ENCODE measurements at regions of chr1 and their contacts with region 1.

Region 1: GRCh38 chr1:113072757-113073478 is at the start of gene LRIG2:
- DNase-seq: peak; percentile 96 to 99 (median 98)
- ATAC-seq: peak; percentile 96
- H3K4me3 ChIP-seq: peak within 1 kb of the TSS; percentile 84 to 91
- H3K4me3 Mint-ChIP-seq: peak within 1 kb of the TSS; percentile 99
- H3K27ac ChIP-seq: peak within 1 kb of the TSS; percentile 75 to 87
- H3K27ac Mint-ChIP-seq: peak within 1 kb of the TSS; percentile 97
- H3K4me1 ChIP-seq: peaks cover 27% of the 10 kb centered on the region
- H3K4me1 Mint-ChIP-seq: peaks cover 34% of the 10 kb centered on the region
- H3K27me3 ChIP-seq: no peaks in the 10 kb centered on the region
- H3K27me3 Mint-ChIP-seq: no peaks in the 10 kb centered on the region
- CTCF ChIP-seq: peak; percentile 93
- total RNA-seq, gene LRIG2: 13.1 to 13.8 TPM

Region 2: GRCh38 chr1:112390775-112391602 is 681.9 kb before region 1 on chr1:
- CTCF ChIA-PET with region 1: interaction called, 4 read pairs
- POLR2A ChIA-PET with region 1: no interaction called
- intact Hi-C with region 1: loop called (anchors 10 kb)
- DNase-seq: peak; percentile 51 to 89 (median 75)
- ATAC-seq: peak; percentile 89
- H3K4me3 ChIP-seq: no peak overlapping the region
- H3K4me3 Mint-ChIP-seq: no peak overlapping the region
- H3K27ac ChIP-seq: no peak overlapping the region
- H3K27ac Mint-ChIP-seq: no peak overlapping the region
- H3K4me1 ChIP-seq: peaks cover 10% of the 10 kb centered on the region
- H3K4me1 Mint-ChIP-seq: peaks cover 10% of the 10 kb centered on the region
- H3K27me3 ChIP-seq: peaks cover 7 to 11% of the 10 kb centered on the region in 2 experiments
- H3K27me3 Mint-ChIP-seq: peaks cover 46% of the 10 kb centered on the region
- CTCF ChIP-seq: peak; percentile 85

Region 3: DNA sequence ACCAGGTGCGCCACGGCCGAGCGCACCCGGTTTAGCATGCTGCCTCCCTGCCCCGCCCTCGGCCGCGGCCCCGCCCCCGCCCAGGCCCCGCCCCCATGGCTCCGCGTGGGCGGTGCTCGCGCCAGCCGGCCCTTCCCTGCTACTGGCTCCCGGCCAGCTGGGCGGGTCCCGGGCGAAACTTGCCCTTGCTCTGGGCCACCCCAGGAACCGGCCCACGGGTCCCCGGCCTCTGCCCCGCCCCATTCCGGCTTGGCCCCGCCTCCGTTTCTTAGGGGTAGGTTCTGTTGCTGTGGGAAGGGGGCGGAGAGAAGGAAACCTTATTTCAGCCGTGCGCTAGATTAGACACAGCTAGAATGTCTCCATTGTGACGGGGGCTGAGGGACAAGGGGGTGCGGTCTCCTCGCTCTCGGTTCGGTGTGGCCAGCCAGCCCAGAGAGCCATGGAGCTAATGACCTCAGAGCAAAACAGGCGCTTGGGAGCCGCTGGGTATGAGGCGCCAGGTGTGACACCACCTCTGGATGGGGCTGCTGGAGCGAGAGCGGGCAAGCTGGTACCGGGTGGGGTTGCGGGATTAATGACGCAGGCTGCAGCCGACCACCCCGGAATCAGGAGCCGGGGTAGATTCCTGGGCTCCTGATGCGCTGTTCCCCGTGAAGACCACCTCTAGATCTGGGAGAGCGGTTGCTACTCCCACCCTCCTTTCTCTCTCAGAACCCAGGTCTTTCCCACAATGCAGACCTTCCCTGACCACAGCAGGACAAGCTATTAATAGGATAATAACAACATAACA is 357.5 kb before region 1 on chr1 and contains the start of gene PPM1J:
- CTCF ChIA-PET with region 1: interaction called, 35 read pairs
- POLR2A ChIA-PET with region 1: interaction called, 8 read pairs
- intact Hi-C with region 1: loop called (anchors 1 to 2 kb)
- DNase-seq: peak; percentile 90 to 97 (median 95)
- ATAC-seq: peak; percentile 82
- H3K4me3 ChIP-seq: peak within 1 kb of the TSS; percentile 52 to 67
- H3K4me3 Mint-ChIP-seq: peak within 1 kb of the TSS; percentile 90
- H3K27ac ChIP-seq: peak within 1 kb of the TSS; percentile 10 to 42
- H3K27ac Mint-ChIP-seq: peak within 1 kb of the TSS; percentile 88
- H3K4me1 ChIP-seq: peaks cover 25% of the 10 kb centered on the region
- H3K4me1 Mint-ChIP-seq: peaks cover 21% of the 10 kb centered on the region
- H3K27me3 ChIP-seq: peaks cover 0 to 10% of the 10 kb centered on the region in 2 experiments
- H3K27me3 Mint-ChIP-seq: peaks cover 12% of the 10 kb centered on the region
- CTCF ChIP-seq: no peak
- total RNA-seq, gene PPM1J: 0.57 to 0.69 TPM

Region 4: DNA sequence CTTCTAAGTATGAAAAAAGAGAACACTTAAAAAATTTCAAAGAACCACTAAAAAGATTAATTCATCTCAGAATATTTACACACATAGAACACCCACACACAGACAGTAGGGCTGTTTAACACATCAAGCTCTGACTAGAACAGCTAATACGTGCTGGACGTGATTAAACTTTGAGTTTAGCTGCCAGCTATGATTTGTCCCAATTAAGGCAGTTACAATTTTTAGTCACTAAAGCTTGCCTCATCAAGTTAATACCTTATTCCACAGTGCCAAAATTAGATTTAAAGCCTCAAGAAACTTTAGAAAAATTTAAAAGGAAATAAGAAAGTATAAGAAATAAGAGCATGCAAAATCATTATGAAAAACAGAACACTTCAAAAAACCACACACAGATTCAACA is 135.8 kb before region 1 on chr1:
- CTCF ChIA-PET with region 1: interaction called, 11 read pairs
- POLR2A ChIA-PET with region 1: no interaction called
- intact Hi-C with region 1: no loop called
- DNase-seq: no peak
- ATAC-seq: no peak
- H3K4me3 ChIP-seq: no peak overlapping the region
- H3K4me3 Mint-ChIP-seq: no peak overlapping the region
- H3K27ac ChIP-seq: no peak overlapping the region
- H3K27ac Mint-ChIP-seq: no peak overlapping the region
- H3K4me1 ChIP-seq: no peaks in the 10 kb centered on the region
- H3K4me1 Mint-ChIP-seq: peaks cover 11% of the 10 kb centered on the region
- H3K27me3 ChIP-seq: no peaks in the 10 kb centered on the region
- H3K27me3 Mint-ChIP-seq: no peaks in the 10 kb centered on the region
- CTCF ChIP-seq: no peak

Region 5: GRCh38 chr1:113057006-113057405 is 15.9 kb before region 1 on chr1:
- CTCF ChIA-PET with region 1: interaction called, 31 read pairs
- POLR2A ChIA-PET with region 1: no interaction called
- intact Hi-C with region 1: no loop called
- DNase-seq: no peak
- ATAC-seq: no peak
- H3K4me3 ChIP-seq: no peak overlapping the region
- H3K4me3 Mint-ChIP-seq: no peak overlapping the region
- H3K27ac ChIP-seq: no peak overlapping the region
- H3K27ac Mint-ChIP-seq: no peak overlapping the region
- H3K4me1 ChIP-seq: no peaks in the 10 kb centered on the region
- H3K4me1 Mint-ChIP-seq: no peaks in the 10 kb centered on the region
- H3K27me3 ChIP-seq: no peaks in the 10 kb centered on the region
- H3K27me3 Mint-ChIP-seq: no peaks in the 10 kb centered on the region
- CTCF ChIP-seq: no peak

Region 6: GRCh38 chr1:113242481-113242880 is 169.6 kb after region 1 on chr1:
- CTCF ChIA-PET with region 1: no interaction called
- POLR2A ChIA-PET with region 1: no interaction called
- intact Hi-C with region 1: no loop called
- DNase-seq: no peak
- ATAC-seq: no peak
- H3K4me3 ChIP-seq: no peak overlapping the region
- H3K4me3 Mint-ChIP-seq: no peak overlapping the region
- H3K27ac ChIP-seq: no peak overlapping the region
- H3K27ac Mint-ChIP-seq: no peak overlapping the region
- H3K4me1 ChIP-seq: no peaks in the 10 kb centered on the region
- H3K4me1 Mint-ChIP-seq: no peaks in the 10 kb centered on the region
- H3K27me3 ChIP-seq: no peaks in the 10 kb centered on the region
- H3K27me3 Mint-ChIP-seq: peaks cover 11% of the 10 kb centered on the region
- CTCF ChIP-seq: no peak

Region 7: DNA sequence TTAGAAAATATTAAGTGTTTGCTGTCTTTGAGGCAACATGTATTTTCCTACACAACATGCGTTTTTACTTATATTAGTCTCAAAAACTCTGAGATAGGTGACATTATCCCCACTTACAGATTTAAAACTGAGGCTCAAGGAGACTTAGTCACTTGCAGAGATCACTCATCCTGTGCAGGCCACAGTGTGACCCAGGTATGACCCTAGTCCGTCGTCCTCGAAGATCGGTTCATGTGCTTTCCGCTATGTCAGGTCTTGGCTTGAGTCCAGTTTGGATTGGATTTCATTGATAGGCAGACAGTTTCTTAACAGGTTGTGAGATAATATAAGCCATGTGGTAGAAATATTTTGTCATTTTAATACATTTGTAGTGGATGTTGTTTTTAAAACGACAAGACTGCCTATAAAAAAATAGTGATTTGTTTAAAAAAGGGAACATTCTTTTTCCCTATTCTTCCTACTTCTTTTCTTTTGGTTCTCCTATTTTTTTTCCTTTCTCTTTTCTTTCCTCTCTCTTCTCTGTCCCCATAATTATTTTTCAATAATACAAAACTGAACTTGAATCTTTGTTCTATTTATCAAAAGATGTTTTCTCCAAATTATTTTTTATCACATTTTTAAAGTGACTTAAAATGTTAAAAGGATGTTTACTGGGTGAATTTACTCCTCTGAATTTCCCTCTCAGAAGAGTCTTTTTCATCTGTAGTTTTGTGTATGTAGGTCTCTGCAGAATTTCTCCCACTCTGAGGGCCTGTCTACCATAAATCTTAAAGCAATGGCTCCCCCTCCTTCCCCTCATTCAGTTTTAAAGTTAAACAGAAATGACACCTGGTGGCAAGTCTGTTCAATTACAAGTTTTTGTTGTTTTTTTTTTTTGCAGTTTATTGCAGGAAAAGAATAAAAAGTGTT is 604.6 kb after region 1 on chr1:
- CTCF ChIA-PET with region 1: interaction called, 7 read pairs
- POLR2A ChIA-PET with region 1: no interaction called
- intact Hi-C with region 1: loop called in 1 of 2 experiments (anchors 2 kb)
- DNase-seq: peak in 2 of 9 experiments; percentile 44 to 59
- ATAC-seq: peak; percentile 57
- H3K4me3 ChIP-seq: no peak overlapping the region
- H3K4me3 Mint-ChIP-seq: no peak overlapping the region
- H3K27ac ChIP-seq: no peak overlapping the region
- H3K27ac Mint-ChIP-seq: no peak overlapping the region
- H3K4me1 ChIP-seq: no peaks in the 10 kb centered on the region
- H3K4me1 Mint-ChIP-seq: no peaks in the 10 kb centered on the region
- H3K27me3 ChIP-seq: no peaks in the 10 kb centered on the region
- H3K27me3 Mint-ChIP-seq: no peaks in the 10 kb centered on the region
- CTCF ChIP-seq: peak; percentile 70

Region 8: DNA sequence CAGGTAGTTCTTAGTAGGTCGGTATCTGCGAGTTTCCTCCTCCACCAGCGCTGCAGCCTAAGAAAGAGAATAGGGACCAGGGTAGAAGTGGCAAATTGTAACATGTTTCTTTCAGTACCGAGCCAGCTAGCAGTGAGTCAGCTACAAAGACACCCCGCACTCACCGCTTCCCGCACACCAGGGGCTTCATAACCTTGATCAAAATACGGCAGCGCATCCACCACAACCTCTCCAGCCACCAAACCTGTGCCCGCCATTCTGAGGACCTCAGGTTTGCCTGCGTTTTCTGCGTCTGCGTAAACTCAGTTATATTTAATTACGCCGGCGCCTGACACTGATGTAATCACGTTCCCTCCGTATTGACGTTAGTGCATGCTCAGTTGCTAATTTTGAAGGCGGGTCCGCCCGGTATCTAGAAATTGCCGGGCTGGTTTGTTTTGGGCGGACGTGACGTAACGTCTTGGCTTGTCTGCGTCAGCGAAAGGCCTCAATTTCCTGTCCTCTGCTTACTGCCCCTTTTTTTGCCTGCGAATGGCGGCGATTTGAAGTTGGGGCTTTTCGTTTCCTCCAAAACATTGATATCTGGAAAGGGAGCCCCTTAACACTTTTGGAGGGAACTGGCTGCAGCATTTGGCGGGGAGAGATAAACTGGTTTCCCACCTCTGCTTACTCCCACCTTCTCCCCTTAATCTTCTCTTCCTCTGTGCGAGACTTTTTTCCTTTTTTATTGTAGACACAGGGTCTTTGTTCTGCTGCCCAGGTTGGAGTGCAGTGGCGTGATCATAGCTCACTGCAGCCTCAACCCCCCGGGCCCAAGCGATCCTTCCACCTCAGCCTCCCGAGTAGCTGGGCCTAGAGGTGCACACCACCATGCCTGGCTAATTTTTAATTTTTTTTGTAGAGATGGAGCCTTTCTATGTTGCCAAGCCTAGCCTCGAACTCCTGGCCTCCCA is 1508.7 kb after region 1 on chr1 and contains the start of gene BCAS2:
- CTCF ChIA-PET with region 1: no interaction called
- POLR2A ChIA-PET with region 1: no interaction called
- intact Hi-C with region 1: loop called in 1 of 2 experiments (anchors 5 kb)
- DNase-seq: peak; percentile 90 to 99 (median 95)
- ATAC-seq: peak; percentile 95
- H3K4me3 ChIP-seq: peak within 1 kb of the TSS; percentile 56 to 72
- H3K4me3 Mint-ChIP-seq: peak within 1 kb of the TSS; percentile 96
- H3K27ac ChIP-seq: peak within 1 kb of the TSS; percentile 84 to 94
- H3K27ac Mint-ChIP-seq: peak within 1 kb of the TSS; percentile 99
- H3K4me1 ChIP-seq: peaks cover 22% of the 10 kb centered on the region
- H3K4me1 Mint-ChIP-seq: peaks cover 46% of the 10 kb centered on the region
- H3K27me3 ChIP-seq: no peaks in the 10 kb centered on the region
- H3K27me3 Mint-ChIP-seq: no peaks in the 10 kb centered on the region
- CTCF ChIP-seq: no peak
- total RNA-seq, gene BCAS2: 113 to 125 TPM